Naive thymus-derived CD4-positive, alpha-beta T cell (primary cell): ENCODE measurements at regions of chr9 and their contacts with region 1.

Region 1: GRCh38 chr9:133149126-133150107 is 14.3 kb downstream of the GBGT1 start:
- DNase-seq: peak; percentile 63 to 88 (median 68)
- ATAC-seq: peak; percentile 67
- H3K4me3 ChIP-seq: peak overlapping the region; percentile 71
- H3K4me3 Mint-ChIP-seq: peak overlapping the region; percentile 55 to 83 (median 76)
- H3K27ac ChIP-seq: peak overlapping the region; percentile 80
- H3K27ac Mint-ChIP-seq: peak overlapping the region; percentile 71 to 88 (median 84)
- H3K4me1 ChIP-seq: peaks cover 27 to 34% of the 10 kb centered on the region in 2 donors
- H3K4me1 Mint-ChIP-seq: peaks cover 10 to 46% (median 35%) of the 10 kb centered on the region in 7 donors
- H3K27me3 ChIP-seq: no peaks in the 10 kb centered on the region
- H3K27me3 Mint-ChIP-seq: no peaks in the 10 kb centered on the region

Region 2: DNA sequence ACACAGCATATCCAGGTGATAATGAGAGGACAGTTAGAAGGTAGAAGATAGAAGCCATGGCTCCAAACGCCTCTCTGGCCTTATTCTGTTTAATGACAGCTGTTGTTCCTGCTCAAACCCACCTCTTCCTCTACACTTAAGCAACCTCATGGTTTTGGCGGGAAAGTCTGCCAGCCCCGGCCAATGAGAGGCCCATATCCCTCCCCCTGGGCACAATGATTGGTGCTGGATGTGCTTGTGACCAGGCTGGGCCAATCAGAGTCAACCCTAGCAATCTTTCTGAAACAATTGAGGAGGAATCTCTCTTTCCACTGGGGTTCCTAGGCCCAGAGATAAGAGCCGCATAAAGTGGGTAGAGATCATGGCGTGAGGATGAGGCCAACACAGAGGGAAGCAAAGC is 175.7 kb before region 1 on chr9:
- CTCF ChIA-PET with region 1: no interaction called
- POLR2A ChIA-PET with region 1: no interaction called
- intact Hi-C with region 1: loop called in 1 of 2 experiments (anchors 1 kb)
- DNase-seq: no peak
- ATAC-seq: no peak
- H3K4me3 ChIP-seq: no peak overlapping the region
- H3K4me3 Mint-ChIP-seq: no peak overlapping the region
- H3K27ac ChIP-seq: no peak overlapping the region
- H3K27ac Mint-ChIP-seq: no peak overlapping the region
- H3K4me1 ChIP-seq: no peaks in the 10 kb centered on the region
- H3K4me1 Mint-ChIP-seq: peaks cover 5 to 12% (median 8%) of the 10 kb centered on the region in 7 donors
- H3K27me3 ChIP-seq: peaks cover 0 to 7% of the 10 kb centered on the region in 2 donors
- H3K27me3 Mint-ChIP-seq: peaks cover 12 to 34% (median 25%) of the 10 kb centered on the region in 5 donors

Region 3: GRCh38 chr9:133041958-133042357 is 107.5 kb before region 1 on chr9:
- CTCF ChIA-PET with region 1: interaction called, 11 read pairs
- POLR2A ChIA-PET with region 1: no interaction called
- intact Hi-C with region 1: loop called (anchors 1 kb)
- DNase-seq: no peak
- ATAC-seq: no peak
- H3K4me3 ChIP-seq: no peak overlapping the region
- H3K4me3 Mint-ChIP-seq: no peak overlapping the region
- H3K27ac ChIP-seq: no peak overlapping the region
- H3K27ac Mint-ChIP-seq: no peak overlapping the region
- H3K4me1 ChIP-seq: no peaks in the 10 kb centered on the region
- H3K4me1 Mint-ChIP-seq: peaks cover 8 to 32% (median 20%) of the 10 kb centered on the region in 7 donors
- H3K27me3 ChIP-seq: no peaks in the 10 kb centered on the region
- H3K27me3 Mint-ChIP-seq: no peaks in the 10 kb centered on the region

Region 4: GRCh38 chr9:133133681-133134418 is 15.6 kb before region 1 on chr9:
- CTCF ChIA-PET with region 1: interaction called, 48 read pairs
- POLR2A ChIA-PET with region 1: interaction called, 65 read pairs
- intact Hi-C with region 1: loop called (anchors 1 kb)
- DNase-seq: peak; percentile 69 to 94 (median 90)
- ATAC-seq: peak; percentile 92
- H3K4me3 ChIP-seq: peak overlapping the region; percentile 20
- H3K4me3 Mint-ChIP-seq: peak overlapping the region; percentile 72 to 85 (median 80)
- H3K27ac ChIP-seq: peak overlapping the region; percentile 92
- H3K27ac Mint-ChIP-seq: peak overlapping the region; percentile 99 to 100 (median 100)
- H3K4me1 ChIP-seq: peaks cover 57 to 68% of the 10 kb centered on the region in 2 donors
- H3K4me1 Mint-ChIP-seq: peaks cover 31 to 75% (median 63%) of the 10 kb centered on the region in 7 donors
- H3K27me3 ChIP-seq: no peaks in the 10 kb centered on the region
- H3K27me3 Mint-ChIP-seq: no peaks in the 10 kb centered on the region

Region 5: DNA sequence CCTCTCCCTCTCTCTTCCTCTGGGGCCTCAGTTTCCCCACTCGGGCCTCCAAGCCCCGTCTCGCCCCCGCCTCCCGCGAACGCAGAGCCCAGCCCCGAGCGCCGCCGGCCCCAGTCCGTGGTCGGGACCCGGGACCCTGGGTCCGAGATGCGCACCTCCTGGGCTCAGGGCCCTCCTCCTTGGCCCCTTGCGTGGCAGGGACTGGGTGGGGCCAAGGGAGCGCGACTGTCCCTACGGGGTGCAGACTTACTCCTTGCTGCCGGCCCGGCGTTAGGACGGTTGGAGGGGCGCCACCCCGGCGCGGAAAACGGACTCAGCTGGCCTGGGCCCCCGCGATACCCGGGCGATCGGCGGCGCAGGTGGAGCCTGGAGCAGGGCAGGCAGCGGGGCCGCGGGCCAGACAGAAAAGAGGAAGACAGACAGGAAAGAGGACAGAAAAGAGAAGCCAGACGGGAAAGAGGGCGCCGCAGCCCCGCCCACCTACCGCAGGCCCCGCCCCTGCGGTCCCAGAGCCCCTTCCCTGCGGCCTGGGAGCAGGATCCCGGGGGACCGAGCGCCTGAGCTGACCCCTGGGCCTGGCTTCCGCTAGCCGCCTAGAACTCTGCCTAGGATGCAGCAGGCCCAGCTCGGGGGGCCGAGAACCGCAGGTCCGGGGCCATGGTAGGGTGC is 14.2 kb after region 1 on chr9 and contains the start of gene GBGT1:
- CTCF ChIA-PET with region 1: no interaction called
- POLR2A ChIA-PET with region 1: no interaction called
- intact Hi-C with region 1: no loop called
- DNase-seq: peak in 3 of 9 donors; percentile 29 to 57 (median 31)
- ATAC-seq: peak; percentile 76
- H3K4me3 ChIP-seq: peak within 1 kb of the TSS; percentile 36
- H3K4me3 Mint-ChIP-seq: peak within 1 kb of the TSS; percentile 67 to 88 (median 78)
- H3K27ac ChIP-seq: peak within 1 kb of the TSS; percentile 64
- H3K27ac Mint-ChIP-seq: peak within 1 kb of the TSS in 2 of 9 donors; percentile 36 to 65
- H3K4me1 ChIP-seq: peaks cover 0 to 3% of the 10 kb centered on the region in 2 donors
- H3K4me1 Mint-ChIP-seq: peaks cover 5 to 14% (median 8%) of the 10 kb centered on the region in 7 donors
- H3K27me3 ChIP-seq: no peaks in the 10 kb centered on the region
- H3K27me3 Mint-ChIP-seq: peaks cover 0 to 10% (median 0%) of the 10 kb centered on the region in 5 donors
- total RNA-seq, gene GBGT1: 3.4 to 14.8 (median 5.5) TPM

Region 6: DNA sequence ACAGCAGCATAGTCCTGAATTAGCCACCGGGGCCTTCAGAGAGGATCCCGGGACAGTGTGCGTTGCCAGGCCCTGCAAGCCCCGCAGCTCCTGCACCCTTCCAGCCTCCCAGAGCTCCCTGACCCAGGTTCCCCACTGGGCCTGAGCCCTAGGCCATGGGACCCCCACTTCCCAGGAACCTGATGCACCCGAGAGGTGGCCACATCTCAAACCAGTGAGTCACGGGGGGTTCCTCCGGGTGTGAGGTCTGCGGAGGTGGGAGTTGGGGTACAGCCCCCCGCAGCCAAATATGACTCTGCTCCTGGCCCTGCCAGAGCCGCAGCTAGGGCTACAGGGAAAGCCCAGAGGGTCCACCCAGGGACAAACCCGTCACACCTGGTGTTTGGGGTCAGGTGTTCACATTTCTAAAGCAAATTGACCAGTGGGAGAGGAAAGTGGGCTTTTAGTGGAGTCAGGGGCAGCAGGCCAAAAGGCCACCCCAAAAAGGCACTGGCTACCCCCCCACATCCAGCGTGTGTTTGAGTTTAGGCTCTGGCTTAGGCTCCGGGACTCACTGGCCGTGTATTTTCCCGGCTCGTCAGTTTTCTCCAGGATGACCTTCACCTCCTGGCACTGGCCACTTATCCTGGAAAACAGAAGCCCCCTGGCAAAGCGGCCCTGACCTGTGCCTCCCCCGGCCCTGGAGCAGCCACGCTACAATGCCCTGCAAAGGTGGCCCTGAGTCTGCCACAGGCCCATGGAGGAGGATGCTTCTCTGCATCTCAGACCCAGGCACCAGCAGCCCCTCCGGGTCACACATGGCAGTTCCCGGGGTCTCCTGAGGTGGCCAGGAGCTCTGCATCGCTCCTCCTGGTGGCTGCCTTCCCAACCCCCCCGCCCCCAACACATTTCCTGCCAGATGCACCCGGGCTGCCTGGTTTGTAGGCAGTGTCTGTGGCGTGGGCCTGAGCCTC is 77.1 kb after region 1 on chr9:
- CTCF ChIA-PET with region 1: no interaction called
- POLR2A ChIA-PET with region 1: no interaction called
- intact Hi-C with region 1: no loop called
- DNase-seq: no peak
- ATAC-seq: no peak
- H3K4me3 ChIP-seq: no peak overlapping the region
- H3K4me3 Mint-ChIP-seq: no peak overlapping the region
- H3K27ac ChIP-seq: no peak overlapping the region
- H3K27ac Mint-ChIP-seq: no peak overlapping the region
- H3K4me1 ChIP-seq: no peaks in the 10 kb centered on the region
- H3K4me1 Mint-ChIP-seq: no peaks in the 10 kb centered on the region
- H3K27me3 ChIP-seq: no peaks in the 10 kb centered on the region
- H3K27me3 Mint-ChIP-seq: peaks cover 0 to 20% (median 6%) of the 10 kb centered on the region in 5 donors

Region 7: DNA sequence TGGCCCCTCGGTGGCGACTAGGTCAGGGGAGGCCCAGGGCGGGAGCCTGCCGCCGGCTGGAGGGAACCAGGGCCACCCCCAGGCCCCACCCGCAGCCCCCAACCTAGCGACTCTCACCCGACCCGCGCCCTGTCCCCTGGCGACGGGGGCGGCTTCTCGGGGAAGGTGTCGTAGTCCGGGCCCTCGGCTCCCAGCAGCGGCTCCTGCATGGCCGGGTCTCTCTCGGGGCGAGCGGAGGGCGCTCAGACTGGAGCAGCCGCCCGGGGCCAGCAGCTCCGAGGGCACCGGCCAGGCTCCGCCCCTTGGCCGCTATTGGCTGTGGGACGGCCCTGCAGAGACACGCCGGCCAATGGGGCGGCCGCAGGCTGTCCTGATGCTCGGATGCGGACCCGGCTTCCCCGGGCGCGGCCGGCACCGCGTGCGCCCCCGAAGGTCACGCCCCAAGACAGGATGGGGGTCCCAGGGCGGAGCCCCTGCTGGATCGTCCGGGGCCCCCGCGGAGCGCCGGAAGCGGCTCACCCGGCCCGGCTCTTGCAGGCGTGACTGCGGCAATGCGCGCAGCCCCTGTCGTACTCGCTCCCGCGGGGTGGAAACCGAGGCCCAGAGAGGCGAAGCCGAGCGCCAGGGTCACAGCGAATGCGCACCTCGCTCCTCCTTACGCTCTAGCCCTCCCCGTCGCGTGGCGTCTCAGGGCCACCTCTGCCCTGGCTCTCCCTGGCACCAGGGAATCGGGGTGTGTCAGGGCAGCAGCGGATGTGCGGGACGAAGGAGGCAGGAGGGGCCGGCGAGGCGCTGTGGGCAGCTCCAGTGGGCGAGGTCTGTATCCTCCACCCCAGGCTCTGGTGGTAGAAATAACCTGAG is 329.7 kb after region 1 on chr9 and contains the start of gene SLC2A6:
- CTCF ChIA-PET with region 1: no interaction called
- POLR2A ChIA-PET with region 1: no interaction called
- intact Hi-C with region 1: loop called in 1 of 2 experiments (anchors 1 kb)
- DNase-seq: peak; percentile 64 to 87 (median 74)
- ATAC-seq: peak; percentile 96
- H3K4me3 ChIP-seq: peak within 1 kb of the TSS; percentile 77
- H3K4me3 Mint-ChIP-seq: peak within 1 kb of the TSS; percentile 50 to 83 (median 78)
- H3K27ac ChIP-seq: peak within 1 kb of the TSS; percentile 50
- H3K27ac Mint-ChIP-seq: peak within 1 kb of the TSS in 5 of 9 donors; percentile 48 to 83 (median 60)
- H3K4me1 ChIP-seq: peaks cover 0 to 12% of the 10 kb centered on the region in 2 donors
- H3K4me1 Mint-ChIP-seq: peaks cover 0 to 15% (median 10%) of the 10 kb centered on the region in 7 donors
- H3K27me3 ChIP-seq: no peaks in the 10 kb centered on the region
- H3K27me3 Mint-ChIP-seq: peaks cover 0 to 12% (median 0%) of the 10 kb centered on the region in 5 donors
- total RNA-seq, gene SLC2A6: 2.4 to 34.7 (median 3.6) TPM

Region 8: DNA sequence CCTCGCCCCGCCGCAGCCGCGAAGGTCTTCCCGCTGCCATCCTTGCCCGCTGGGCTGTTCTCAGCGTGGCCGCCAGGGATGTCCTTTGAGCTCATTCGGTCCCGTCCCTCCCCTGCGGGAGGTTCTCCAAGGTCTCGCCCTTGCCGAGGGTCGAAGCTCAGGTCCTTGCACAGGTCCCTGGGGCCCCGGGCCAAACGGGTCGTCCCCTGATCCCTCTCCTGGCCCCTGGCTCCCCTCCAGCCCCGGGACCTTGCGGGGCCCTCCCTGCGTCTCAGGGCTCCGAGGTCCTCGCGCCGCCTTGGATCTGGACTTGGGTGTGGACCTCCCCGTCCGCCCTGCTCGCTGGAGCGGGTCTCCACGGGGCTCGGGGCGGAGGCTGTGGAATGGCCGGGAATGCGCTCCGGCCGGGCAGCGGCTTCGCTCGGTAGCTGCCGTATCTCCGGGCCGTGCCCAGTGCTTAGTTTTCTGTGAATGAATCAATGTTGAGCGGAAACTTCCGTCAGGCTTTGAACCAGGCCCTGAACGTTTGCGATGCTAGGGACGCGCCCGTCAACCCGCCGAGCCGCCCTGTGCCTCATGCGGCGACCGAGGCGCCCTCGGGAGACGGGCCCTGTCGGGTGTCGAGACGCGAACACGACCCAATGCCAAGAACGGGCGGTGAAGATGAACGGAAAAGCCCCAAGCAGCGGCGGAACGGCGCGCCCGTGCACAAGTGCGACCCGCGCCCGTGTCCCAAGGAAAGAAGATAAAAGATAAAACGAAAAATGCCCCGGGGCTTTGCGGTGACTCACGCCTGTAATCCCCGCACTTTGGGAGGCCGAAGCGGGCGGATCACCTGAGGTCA is 1014.2 kb after region 1 on chr9:
- CTCF ChIA-PET with region 1: no interaction called
- POLR2A ChIA-PET with region 1: no interaction called
- intact Hi-C with region 1: loop called in 1 of 2 experiments (anchors 10 kb)
- DNase-seq: peak; percentile 52 to 73 (median 71)
- ATAC-seq: no peak
- H3K4me3 ChIP-seq: no peak overlapping the region
- H3K4me3 Mint-ChIP-seq: no peak overlapping the region
- H3K27ac ChIP-seq: no peak overlapping the region
- H3K27ac Mint-ChIP-seq: peak overlapping the region in 1 of 9 donors; percentile 52
- H3K4me1 ChIP-seq: peaks cover 0 to 18% of the 10 kb centered on the region in 2 donors
- H3K4me1 Mint-ChIP-seq: peaks cover 0 to 28% (median 19%) of the 10 kb centered on the region in 7 donors
- H3K27me3 ChIP-seq: no peaks in the 10 kb centered on the region
- H3K27me3 Mint-ChIP-seq: no peaks in the 10 kb centered on the region